ENCODE measurements at regions of chr22 and their contacts with region 1.

Region 1: DNA sequence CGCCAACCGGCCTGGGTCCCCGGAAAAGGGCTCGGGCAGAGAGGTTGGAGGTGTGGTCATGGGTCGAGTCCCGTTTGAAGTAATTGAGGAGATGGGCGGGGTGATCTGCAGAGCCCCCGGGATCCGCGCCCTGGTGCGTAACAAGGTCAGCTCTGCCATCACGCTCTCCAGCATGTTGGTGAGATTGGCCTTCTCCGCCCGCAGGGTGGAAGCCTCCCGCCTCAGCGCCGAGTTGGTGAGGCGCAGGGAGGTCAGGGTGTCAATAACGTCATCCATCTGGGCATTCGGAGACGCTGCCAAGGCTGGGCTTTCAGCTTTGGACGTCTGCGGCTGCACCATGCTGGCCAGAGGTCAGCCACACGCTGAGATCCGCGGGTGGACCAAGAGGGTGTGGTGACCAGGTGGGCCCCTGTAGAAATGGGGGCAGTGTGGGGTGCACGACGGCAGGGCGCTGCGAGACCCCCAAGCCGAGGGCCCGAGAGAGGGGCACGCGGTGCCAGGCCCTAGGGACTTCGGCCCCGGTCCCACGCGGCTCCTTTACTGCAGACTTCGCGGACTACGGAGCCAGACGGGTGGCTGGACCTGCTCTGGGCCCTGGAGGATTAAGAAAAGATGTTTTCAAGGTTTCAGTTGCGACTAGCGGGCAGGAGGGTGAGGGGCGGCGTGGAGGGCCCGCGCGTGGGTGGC is 672 bp downstream of the RTL6 start:
- DNase-seq: no peak
- H3K4me3 ChIP-seq: peak overlapping the region; percentile 43 to 72 (median 44)
- H3K4me3 Mint-ChIP-seq: peak overlapping the region; percentile 74 to 86
- H3K27ac ChIP-seq: peak overlapping the region in 1 of 2 donors; percentile 87
- H3K27ac Mint-ChIP-seq: peak overlapping the region in 6 of 7 donors; percentile 79 to 93 (median 90)
- H3K4me1 ChIP-seq: peaks cover 11 to 15% of the 10 kb centered on the region in 2 donors
- H3K4me1 Mint-ChIP-seq: peaks cover 9% of the 10 kb centered on the region
- H3K27me3 ChIP-seq: peaks cover 0 to 2% of the 10 kb centered on the region in 2 donors
- H3K27me3 Mint-ChIP-seq: peaks cover 2 to 4% (median 2%) of the 10 kb centered on the region in 3 donors
- CTCF ChIP-seq: no peak

Region 2: DNA sequence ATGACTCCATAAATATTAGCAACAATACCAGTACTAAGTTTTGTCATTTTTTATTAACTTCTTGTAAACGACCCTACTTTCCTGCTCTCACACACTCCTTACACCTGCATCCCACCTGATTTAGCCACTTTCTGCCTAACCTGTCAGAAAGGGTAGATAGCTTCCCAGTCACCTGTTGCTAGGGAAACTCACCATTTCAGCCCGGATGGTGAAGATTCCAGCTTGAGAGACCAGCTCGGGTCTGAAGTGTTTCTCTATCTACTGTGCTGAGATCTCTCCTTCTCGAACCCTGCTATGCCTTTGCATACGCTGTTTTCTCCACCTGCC is 316.7 kb before region 1 on chr22 and contains the start of gene PARVG:
- intact Hi-C with region 1: loop called in 1 of 2 experiments (anchors 10 kb)
- DNase-seq: peak; percentile 47 to 62 (median 54)
- H3K4me3 ChIP-seq: peak within 1 kb of the TSS; percentile 56 to 90 (median 86)
- H3K4me3 Mint-ChIP-seq: peak within 1 kb of the TSS; percentile 90 to 95
- H3K27ac ChIP-seq: peak within 1 kb of the TSS; percentile 93 to 97
- H3K27ac Mint-ChIP-seq: peak within 1 kb of the TSS; percentile 96 to 100 (median 98)
- H3K4me1 ChIP-seq: peaks cover 32 to 44% of the 10 kb centered on the region in 2 donors
- H3K4me1 Mint-ChIP-seq: peaks cover 35% of the 10 kb centered on the region
- H3K27me3 ChIP-seq: no peaks in the 10 kb centered on the region
- H3K27me3 Mint-ChIP-seq: no peaks in the 10 kb centered on the region
- CTCF ChIP-seq: no peak
- polyA plus RNA-seq, gene PARVG: 169 to 577 (median 190) TPM

Region 3: DNA sequence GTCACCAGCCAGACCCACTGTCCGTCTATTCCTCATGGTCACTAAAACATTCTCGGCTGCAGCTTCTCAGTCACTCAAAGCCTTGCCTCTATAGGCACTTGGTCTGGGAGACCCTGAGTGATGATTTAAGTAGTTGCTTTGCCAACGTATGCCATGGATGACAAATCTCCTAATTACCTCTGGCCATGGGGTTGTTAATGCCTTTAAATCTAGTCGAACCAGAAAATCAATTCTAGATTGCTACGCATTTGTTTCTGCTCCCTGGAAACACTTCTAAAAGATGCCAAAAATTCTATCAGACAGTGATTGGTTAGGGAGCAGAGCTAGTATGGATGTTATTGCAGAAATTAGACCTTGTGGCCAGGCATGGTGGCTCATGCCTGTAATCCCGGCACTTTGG is 57.7 kb after region 1 on chr22:
- intact Hi-C with region 1: loop called in 1 of 2 experiments (anchors 5 kb)
- DNase-seq: no peak
- H3K4me3 ChIP-seq: no peak overlapping the region
- H3K4me3 Mint-ChIP-seq: peak overlapping the region in 1 of 2 donors; percentile 49
- H3K27ac ChIP-seq: no peak overlapping the region
- H3K27ac Mint-ChIP-seq: no peak overlapping the region
- H3K4me1 ChIP-seq: peaks cover 8 to 10% of the 10 kb centered on the region in 2 donors
- H3K4me1 Mint-ChIP-seq: peaks cover 13% of the 10 kb centered on the region
- H3K27me3 ChIP-seq: peaks cover 0 to 3% of the 10 kb centered on the region in 2 donors
- H3K27me3 Mint-ChIP-seq: peaks cover 10 to 17% (median 15%) of the 10 kb centered on the region in 3 donors
- CTCF ChIP-seq: no peak

Region 4: GRCh38 chr22:44620129-44620840 is 122.9 kb after region 1 on chr22:
- intact Hi-C with region 1: loop called in 1 of 2 experiments (anchors 5 kb)
- DNase-seq: peak; percentile 80 to 91 (median 87)
- H3K4me3 ChIP-seq: no peak overlapping the region
- H3K4me3 Mint-ChIP-seq: peak overlapping the region in 1 of 2 donors; percentile 59
- H3K27ac ChIP-seq: peak overlapping the region in 1 of 2 donors; percentile 41
- H3K27ac Mint-ChIP-seq: peak overlapping the region in 2 of 7 donors; percentile 88 to 94
- H3K4me1 ChIP-seq: peaks cover 7 to 14% of the 10 kb centered on the region in 2 donors
- H3K4me1 Mint-ChIP-seq: peaks cover 4% of the 10 kb centered on the region
- H3K27me3 ChIP-seq: peaks cover 0 to 19% of the 10 kb centered on the region in 2 donors
- H3K27me3 Mint-ChIP-seq: peaks cover 4 to 16% (median 6%) of the 10 kb centered on the region in 3 donors
- CTCF ChIP-seq: no peak